Natural killer cell (primary cell): ENCODE measurements at regions of chr14 and their contacts with region 1.

Region 1: GRCh38 chr14:63478010-63478409 is 65.2 kb downstream of the PPP2R5E start:
- DNase-seq: peak in 1 of 2 donors; percentile 64
- ATAC-seq: peak; percentile 86 to 92 (median 92)
- H3K4me3 ChIP-seq: no peak overlapping the region
- H3K4me3 Mint-ChIP-seq: peak overlapping the region; percentile 43
- H3K27ac ChIP-seq: peak overlapping the region; percentile 74
- H3K27ac Mint-ChIP-seq: peak overlapping the region; percentile 82 to 88
- H3K4me1 ChIP-seq: peaks cover 9% of the 10 kb centered on the region
- H3K4me1 Mint-ChIP-seq: peaks cover 21 to 43% of the 10 kb centered on the region in 2 donors
- H3K27me3 ChIP-seq: no peaks in the 10 kb centered on the region
- H3K27me3 Mint-ChIP-seq: no peaks in the 10 kb centered on the region
- CTCF ChIP-seq: no peak

Region 2: GRCh38 chr14:63096186-63096585 is 381.8 kb before region 1 on chr14:
- intact Hi-C with region 1: no loop called
- DNase-seq: no peak
- ATAC-seq: no peak
- H3K4me3 ChIP-seq: no peak overlapping the region
- H3K4me3 Mint-ChIP-seq: no peak overlapping the region
- H3K27ac ChIP-seq: no peak overlapping the region
- H3K27ac Mint-ChIP-seq: no peak overlapping the region
- H3K4me1 ChIP-seq: no peaks in the 10 kb centered on the region
- H3K4me1 Mint-ChIP-seq: no peaks in the 10 kb centered on the region
- H3K27me3 ChIP-seq: no peaks in the 10 kb centered on the region
- H3K27me3 Mint-ChIP-seq: peaks cover 0 to 10% of the 10 kb centered on the region in 2 donors
- CTCF ChIP-seq: no peak

Region 3: DNA sequence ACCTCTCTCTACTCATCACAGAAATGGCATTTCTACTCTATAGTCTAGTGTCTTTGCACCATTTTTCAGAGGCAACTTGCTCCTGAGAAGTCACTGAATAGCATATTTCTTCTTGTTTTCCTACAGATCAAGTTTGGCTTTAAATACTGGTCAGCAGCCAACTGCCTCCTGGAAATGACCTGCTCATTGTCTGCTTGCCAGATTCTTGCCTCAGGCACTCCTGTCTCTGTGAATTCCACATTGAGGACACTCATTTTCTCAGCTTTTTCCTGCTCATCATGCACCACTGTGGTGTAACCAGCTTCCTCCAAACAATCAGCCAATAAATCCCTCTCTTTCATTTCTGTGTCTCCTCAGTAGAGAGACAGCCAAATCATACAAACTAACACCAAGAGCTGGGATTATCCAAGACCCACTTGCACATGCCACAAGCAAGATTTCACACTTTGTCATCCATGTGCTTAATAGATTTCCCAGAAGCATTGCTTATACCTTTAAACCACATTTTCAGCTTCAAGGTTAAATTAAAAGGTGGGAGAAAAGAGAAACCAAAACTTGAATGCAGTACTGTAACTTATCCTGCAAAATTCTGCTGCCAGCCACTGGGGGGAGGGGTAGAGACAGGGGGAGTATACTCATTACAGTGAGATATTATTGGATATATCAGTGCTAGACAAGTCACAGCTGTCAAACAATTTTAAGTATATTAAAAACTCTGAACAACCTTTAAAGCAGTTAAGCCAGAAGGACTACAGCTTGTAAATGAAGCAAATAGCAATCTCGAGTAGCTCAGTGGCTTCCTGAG is 39.9 kb before region 1 on chr14:
- intact Hi-C with region 1: loop called (anchors 5 kb)
- DNase-seq: peak in 1 of 2 donors; percentile 37
- ATAC-seq: peak; percentile 71 to 84 (median 77)
- H3K4me3 ChIP-seq: no peak overlapping the region
- H3K4me3 Mint-ChIP-seq: peak overlapping the region; percentile 67
- H3K27ac ChIP-seq: no peak overlapping the region
- H3K27ac Mint-ChIP-seq: peak overlapping the region; percentile 73 to 79
- H3K4me1 ChIP-seq: peaks cover 11% of the 10 kb centered on the region
- H3K4me1 Mint-ChIP-seq: peaks cover 61 to 62% of the 10 kb centered on the region in 2 donors
- H3K27me3 ChIP-seq: no peaks in the 10 kb centered on the region
- H3K27me3 Mint-ChIP-seq: no peaks in the 10 kb centered on the region
- CTCF ChIP-seq: peak; percentile 26

Region 4: DNA sequence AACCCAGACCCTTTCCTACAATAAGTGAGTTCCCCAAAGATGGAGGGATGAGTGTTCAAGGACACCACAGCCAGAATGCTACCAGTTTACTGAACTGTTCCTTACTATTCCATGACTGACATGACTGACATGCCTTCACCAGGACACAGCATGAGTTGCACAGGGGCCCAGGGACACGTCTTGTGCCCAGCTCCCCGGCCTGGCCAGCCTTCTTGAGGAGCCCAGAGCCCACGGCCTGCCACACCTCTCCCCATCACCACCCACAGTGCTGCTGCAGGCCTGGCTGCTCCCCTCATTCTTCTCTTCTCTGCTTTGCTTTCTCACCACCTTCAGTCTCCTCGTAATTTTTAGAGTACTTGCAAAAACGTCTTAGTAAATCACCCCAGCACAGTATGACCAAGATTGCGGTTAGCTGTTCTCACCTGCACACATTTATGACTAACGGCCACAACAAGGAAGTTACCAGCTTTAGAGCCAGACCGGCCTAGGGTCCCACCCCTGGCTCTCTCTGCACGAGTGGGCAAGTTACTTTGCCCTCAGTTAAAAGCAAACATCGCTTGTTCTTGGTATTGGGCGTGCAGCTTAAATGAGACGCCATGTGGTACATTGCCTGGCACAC is 46.6 kb after region 1 on chr14:
- intact Hi-C with region 1: no loop called
- DNase-seq: peak; percentile 39 to 61
- ATAC-seq: peak; percentile 91 to 96 (median 95)
- H3K4me3 ChIP-seq: no peak overlapping the region
- H3K4me3 Mint-ChIP-seq: peak overlapping the region; percentile 67
- H3K27ac ChIP-seq: peak overlapping the region; percentile 51
- H3K27ac Mint-ChIP-seq: peak overlapping the region; percentile 87 to 88
- H3K4me1 ChIP-seq: peaks cover 10% of the 10 kb centered on the region
- H3K4me1 Mint-ChIP-seq: peaks cover 34 to 37% of the 10 kb centered on the region in 2 donors
- H3K27me3 ChIP-seq: no peaks in the 10 kb centered on the region
- H3K27me3 Mint-ChIP-seq: no peaks in the 10 kb centered on the region
- CTCF ChIP-seq: no peak

Region 5: DNA sequence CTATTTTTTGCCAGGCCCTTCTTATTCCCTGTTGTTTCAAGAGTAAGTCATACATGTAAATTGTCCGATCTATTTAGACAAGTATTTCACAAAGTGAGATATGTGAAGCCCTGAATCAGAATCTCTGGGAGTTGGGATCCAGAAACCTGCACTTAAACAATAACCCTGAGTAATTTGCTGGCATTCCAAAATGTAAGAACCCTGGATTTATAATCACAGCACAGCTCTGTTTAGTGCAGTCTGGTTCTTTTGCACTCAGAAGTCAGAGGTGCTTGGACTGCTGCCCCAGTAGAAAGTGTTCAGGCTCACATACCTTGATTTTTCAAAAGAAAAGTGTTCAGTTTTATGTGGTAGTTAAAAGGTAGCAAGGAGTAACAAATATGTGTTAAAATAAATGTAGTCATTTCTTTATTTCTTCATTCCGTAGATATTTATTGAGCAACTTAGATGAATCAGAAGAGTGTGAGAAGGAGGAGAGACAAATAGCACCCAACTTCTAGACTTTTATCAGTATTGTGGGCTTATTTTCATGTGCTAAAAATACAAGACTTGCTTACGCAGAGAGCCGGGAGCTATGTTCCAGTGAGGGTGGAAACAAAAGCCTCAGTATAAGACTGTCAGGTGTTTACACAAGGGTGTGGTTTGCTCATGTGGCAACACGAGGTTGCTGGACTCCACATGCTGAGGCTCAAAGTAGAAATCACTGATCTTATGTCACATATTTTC is 444.8 kb after region 1 on chr14:
- intact Hi-C with region 1: no loop called
- DNase-seq: peak in 1 of 2 donors; percentile 20
- ATAC-seq: peak; percentile 24 to 81 (median 63)
- H3K4me3 ChIP-seq: no peak overlapping the region
- H3K4me3 Mint-ChIP-seq: no peak overlapping the region
- H3K27ac ChIP-seq: no peak overlapping the region
- H3K27ac Mint-ChIP-seq: peak overlapping the region in 1 of 2 donors; percentile 74
- H3K4me1 ChIP-seq: peaks cover 3% of the 10 kb centered on the region
- H3K4me1 Mint-ChIP-seq: peaks cover 28 to 31% of the 10 kb centered on the region in 2 donors
- H3K27me3 ChIP-seq: no peaks in the 10 kb centered on the region
- H3K27me3 Mint-ChIP-seq: no peaks in the 10 kb centered on the region
- CTCF ChIP-seq: no peak